ENCODE measurements at regions of chr11 and their contacts with region 1.

Region 1: DNA sequence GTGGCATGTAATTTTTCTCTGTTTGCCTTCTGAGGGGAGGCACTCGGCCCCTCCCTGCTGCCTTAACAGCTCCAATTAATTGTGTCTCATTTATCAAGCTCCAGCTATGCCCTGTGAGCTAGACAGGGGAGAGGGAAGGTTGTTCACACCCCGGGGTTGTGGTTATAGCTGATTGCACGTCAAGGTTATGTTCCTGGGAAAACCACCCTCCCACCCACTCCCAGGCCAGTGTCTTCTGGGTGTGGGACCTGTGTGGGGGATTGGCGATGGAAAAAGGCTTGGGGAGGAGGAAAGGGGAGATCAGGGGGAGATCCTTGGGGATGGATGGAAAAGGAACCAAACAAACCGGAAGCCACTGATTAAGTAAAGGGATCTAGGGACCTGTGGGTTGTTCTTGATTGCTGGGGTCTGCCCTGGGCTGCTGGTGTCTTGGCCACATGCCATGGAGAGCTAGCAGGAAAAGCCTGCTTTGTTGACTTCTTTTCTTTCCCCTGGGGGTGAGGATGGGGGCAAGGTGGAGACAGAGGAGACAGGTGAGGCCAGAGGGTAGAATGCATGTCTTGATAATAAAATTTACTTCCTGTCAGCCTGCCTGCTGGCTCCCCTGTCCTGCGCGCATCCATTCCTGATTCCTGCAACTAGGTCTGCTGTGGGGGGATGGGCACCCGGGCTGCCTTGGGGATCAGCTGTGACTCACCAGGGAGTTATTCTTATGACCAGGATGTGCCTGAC is 13.5 kb upstream of the SORL1-AS1 start:
- DNase-seq: peak; percentile 95 to 98
- H3K4me3 ChIP-seq: no peak overlapping the region
- H3K4me3 Mint-ChIP-seq: peak overlapping the region; percentile 33
- H3K27ac Mint-ChIP-seq: peak overlapping the region; percentile 91
- H3K4me1 ChIP-seq: peaks cover 48% of the 10 kb centered on the region
- H3K4me1 Mint-ChIP-seq: peaks cover 35% of the 10 kb centered on the region
- H3K27me3 ChIP-seq: no peaks in the 10 kb centered on the region
- H3K27me3 Mint-ChIP-seq: no peaks in the 10 kb centered on the region
- CTCF ChIP-seq: no peak

Region 2: GRCh38 chr11:121141066-121141465 is 325.2 kb before region 1 on chr11:
- CTCF ChIA-PET with region 1: no interaction called
- POLR2A ChIA-PET with region 1: no interaction called
- intact Hi-C with region 1: no loop called
- DNase-seq: no peak
- H3K4me3 ChIP-seq: no peak overlapping the region
- H3K4me3 Mint-ChIP-seq: no peak overlapping the region
- H3K27ac Mint-ChIP-seq: no peak overlapping the region
- H3K4me1 ChIP-seq: no peaks in the 10 kb centered on the region
- H3K4me1 Mint-ChIP-seq: no peaks in the 10 kb centered on the region
- H3K27me3 ChIP-seq: no peaks in the 10 kb centered on the region
- H3K27me3 Mint-ChIP-seq: peaks cover 29% of the 10 kb centered on the region
- CTCF ChIP-seq: no peak

Region 3: DNA sequence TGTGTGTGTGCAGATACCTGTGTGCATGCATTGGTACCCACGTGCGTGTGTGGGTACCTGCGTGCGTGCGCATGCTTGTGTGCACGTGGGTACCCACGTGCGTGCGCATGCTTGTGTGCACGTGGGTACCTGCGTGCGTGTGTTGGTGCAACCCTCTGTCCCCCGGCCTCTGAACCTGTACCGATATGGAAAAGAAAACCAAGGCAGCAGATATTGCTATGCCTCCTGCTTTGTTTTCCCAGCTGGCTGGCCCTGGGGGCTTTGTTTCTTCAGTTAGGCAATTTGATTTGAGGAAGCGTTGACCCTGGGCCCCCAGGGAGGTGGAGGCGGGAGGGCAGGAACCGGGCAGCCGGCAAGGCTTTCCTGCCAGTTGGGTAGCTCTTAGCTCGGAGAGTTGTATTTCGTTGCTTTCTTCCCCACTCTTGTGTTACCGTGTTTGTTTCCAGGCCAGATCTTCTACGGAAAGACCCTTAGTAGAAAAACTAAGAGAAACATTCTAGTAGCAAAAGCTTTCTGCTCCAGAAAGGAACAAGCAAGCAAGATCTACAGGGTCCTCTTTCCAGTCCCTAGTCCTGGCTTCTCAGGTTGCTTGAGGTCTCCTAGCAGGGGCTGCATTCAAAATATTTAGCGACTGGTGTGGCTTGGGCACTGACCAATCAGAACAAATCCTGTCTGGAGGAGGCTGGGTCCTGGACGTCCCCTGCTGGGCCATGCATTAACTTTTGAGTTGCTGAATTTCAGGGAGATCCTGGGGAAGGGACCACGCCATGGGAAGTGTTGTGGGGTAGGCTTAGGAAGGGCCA is 12.9 kb after region 1 on chr11:
- CTCF ChIA-PET with region 1: interaction called, 3 read pairs
- POLR2A ChIA-PET with region 1: no interaction called
- intact Hi-C with region 1: loop called (anchors 1 kb)
- DNase-seq: no peak
- H3K4me3 ChIP-seq: no peak overlapping the region
- H3K4me3 Mint-ChIP-seq: no peak overlapping the region
- H3K27ac Mint-ChIP-seq: no peak overlapping the region
- H3K4me1 ChIP-seq: peaks cover 13% of the 10 kb centered on the region
- H3K4me1 Mint-ChIP-seq: peaks cover 9% of the 10 kb centered on the region
- H3K27me3 ChIP-seq: no peaks in the 10 kb centered on the region
- H3K27me3 Mint-ChIP-seq: no peaks in the 10 kb centered on the region
- CTCF ChIP-seq: no peak

Region 4: GRCh38 chr11:121508449-121508848 is 42.2 kb after region 1 on chr11:
- CTCF ChIA-PET with region 1: no interaction called
- POLR2A ChIA-PET with region 1: no interaction called
- intact Hi-C with region 1: no loop called
- DNase-seq: no peak
- H3K4me3 ChIP-seq: no peak overlapping the region
- H3K4me3 Mint-ChIP-seq: no peak overlapping the region
- H3K27ac Mint-ChIP-seq: no peak overlapping the region
- H3K4me1 ChIP-seq: no peaks in the 10 kb centered on the region
- H3K4me1 Mint-ChIP-seq: no peaks in the 10 kb centered on the region
- H3K27me3 ChIP-seq: no peaks in the 10 kb centered on the region
- H3K27me3 Mint-ChIP-seq: no peaks in the 10 kb centered on the region
- CTCF ChIP-seq: no peak